Mammary epithelial cell (primary cell): ENCODE measurements at regions of chr20 and their contacts with region 1.

Region 1: GRCh38 chr20:12535316-12535715 is 473.5 kb upstream of the SPTLC3 start:
- DNase-seq: no peak
- H3K4me3 ChIP-seq: no peak overlapping the region
- H3K27ac ChIP-seq: no peak overlapping the region
- H3K4me1 ChIP-seq: no peaks in the 10 kb centered on the region
- H3K27me3 ChIP-seq: no peaks in the 10 kb centered on the region
- CTCF ChIP-seq: no peak

Region 2: DNA sequence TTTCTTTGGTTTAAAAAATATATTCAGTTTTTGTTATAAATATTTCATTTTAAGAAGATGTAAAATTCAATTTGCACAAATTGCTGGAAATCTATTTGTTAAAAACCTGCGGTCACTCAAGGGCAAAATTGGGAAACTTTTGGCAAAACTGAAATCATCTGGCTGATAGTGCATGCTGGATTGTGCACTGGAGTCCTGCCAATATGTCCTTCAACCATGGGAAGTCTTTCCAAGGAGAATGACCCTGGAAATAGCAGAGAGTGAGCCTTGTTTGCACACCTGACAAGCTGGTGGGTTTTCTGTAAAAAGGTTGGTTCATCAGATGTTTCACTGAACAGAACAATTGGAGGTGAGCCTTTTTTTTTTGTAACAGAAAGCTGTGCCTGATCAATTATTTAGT is 204.1 kb before region 1 on chr20:
- CTCF ChIA-PET with region 1: no interaction called
- dilution Hi-C with region 1: no loop called
- in situ Hi-C with region 1: no loop called
- intact Hi-C with region 1: no loop called
- DNase-seq: no peak
- H3K4me3 ChIP-seq: no peak overlapping the region
- H3K27ac ChIP-seq: no peak overlapping the region
- H3K4me1 ChIP-seq: no peaks in the 10 kb centered on the region
- H3K27me3 ChIP-seq: no peaks in the 10 kb centered on the region
- CTCF ChIP-seq: no peak

Region 3: DNA sequence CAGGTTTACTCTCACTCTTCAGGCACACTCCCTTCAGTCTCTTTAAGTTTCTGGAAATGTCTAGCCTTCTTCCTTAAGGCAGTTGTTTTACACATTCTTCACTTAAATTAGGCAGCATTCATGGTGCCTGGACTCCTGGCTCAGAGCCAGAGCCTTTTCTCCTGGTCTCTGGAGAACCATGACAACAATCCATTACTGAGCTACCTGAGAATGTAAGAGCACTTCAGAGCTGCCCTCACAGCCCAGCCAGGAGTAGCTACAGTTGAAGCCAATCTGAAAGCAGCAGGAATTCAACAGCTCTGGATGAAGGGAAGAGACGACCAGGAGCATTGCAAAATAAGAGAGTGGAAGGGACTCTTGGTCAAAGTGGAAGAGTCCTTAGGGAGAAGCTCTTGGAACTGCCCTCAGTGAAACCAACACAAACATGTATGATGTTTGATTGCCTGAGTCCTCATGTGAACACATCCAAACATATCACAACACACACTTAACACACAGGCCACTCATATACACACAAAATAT is 56.7 kb after region 1 on chr20:
- CTCF ChIA-PET with region 1: no interaction called
- dilution Hi-C with region 1: no loop called
- in situ Hi-C with region 1: no loop called
- intact Hi-C with region 1: loop called (anchors 2 kb)
- DNase-seq: no peak
- H3K4me3 ChIP-seq: no peak overlapping the region
- H3K27ac ChIP-seq: no peak overlapping the region
- H3K4me1 ChIP-seq: no peaks in the 10 kb centered on the region
- H3K27me3 ChIP-seq: no peaks in the 10 kb centered on the region
- CTCF ChIP-seq: no peak